Mammary epithelial cell (primary cell): ENCODE measurements at regions of chr18 and their contacts with region 1.

Region 1: GRCh38 chr18:25921677-25922421 is 168.6 kb downstream of the SS18 start:
- DNase-seq: peak; percentile 31
- H3K4me3 ChIP-seq: no peak overlapping the region
- H3K27ac ChIP-seq: no peak overlapping the region
- H3K4me1 ChIP-seq: no peaks in the 10 kb centered on the region
- H3K27me3 ChIP-seq: no peaks in the 10 kb centered on the region
- CTCF ChIP-seq: peak; percentile 65 to 80

Region 2: DNA sequence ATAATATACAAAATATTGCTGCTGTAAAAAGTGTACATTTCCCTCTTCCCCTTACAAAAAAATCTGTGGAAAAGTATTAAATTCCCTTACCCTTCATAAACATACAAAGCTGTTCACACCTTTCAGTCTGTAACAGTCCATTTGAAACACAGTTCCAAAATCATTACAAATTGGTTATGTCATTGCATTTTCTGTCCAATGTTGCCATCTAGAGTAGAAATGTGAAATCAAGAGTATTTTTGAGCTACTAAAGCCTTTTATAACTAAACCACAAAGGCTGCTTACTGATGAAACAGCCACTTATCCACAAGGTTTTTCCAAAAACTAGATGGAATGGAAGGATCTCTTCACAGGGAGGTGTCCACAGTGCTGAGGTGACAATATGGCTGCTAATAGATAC is 96.1 kb after region 1 on chr18:
- CTCF ChIA-PET with region 1: no interaction called
- dilution Hi-C with region 1: no loop called
- in situ Hi-C with region 1: no loop called
- intact Hi-C with region 1: no loop called
- DNase-seq: no peak
- H3K4me3 ChIP-seq: no peak overlapping the region
- H3K27ac ChIP-seq: no peak overlapping the region
- H3K4me1 ChIP-seq: no peaks in the 10 kb centered on the region
- H3K27me3 ChIP-seq: no peaks in the 10 kb centered on the region
- CTCF ChIP-seq: no peak

Region 3: GRCh38 chr18:26159353-26159752 is 237.5 kb after region 1 on chr18:
- CTCF ChIA-PET with region 1: no interaction called
- dilution Hi-C with region 1: no loop called
- in situ Hi-C with region 1: no loop called
- intact Hi-C with region 1: loop called (anchors 1 kb)
- DNase-seq: no peak
- H3K4me3 ChIP-seq: no peak overlapping the region
- H3K27ac ChIP-seq: no peak overlapping the region
- H3K4me1 ChIP-seq: no peaks in the 10 kb centered on the region
- H3K27me3 ChIP-seq: no peaks in the 10 kb centered on the region
- CTCF ChIP-seq: peak; percentile 16 to 29